ENCODE measurements at regions of chr18 and their contacts with region 1.

Region 1: DNA sequence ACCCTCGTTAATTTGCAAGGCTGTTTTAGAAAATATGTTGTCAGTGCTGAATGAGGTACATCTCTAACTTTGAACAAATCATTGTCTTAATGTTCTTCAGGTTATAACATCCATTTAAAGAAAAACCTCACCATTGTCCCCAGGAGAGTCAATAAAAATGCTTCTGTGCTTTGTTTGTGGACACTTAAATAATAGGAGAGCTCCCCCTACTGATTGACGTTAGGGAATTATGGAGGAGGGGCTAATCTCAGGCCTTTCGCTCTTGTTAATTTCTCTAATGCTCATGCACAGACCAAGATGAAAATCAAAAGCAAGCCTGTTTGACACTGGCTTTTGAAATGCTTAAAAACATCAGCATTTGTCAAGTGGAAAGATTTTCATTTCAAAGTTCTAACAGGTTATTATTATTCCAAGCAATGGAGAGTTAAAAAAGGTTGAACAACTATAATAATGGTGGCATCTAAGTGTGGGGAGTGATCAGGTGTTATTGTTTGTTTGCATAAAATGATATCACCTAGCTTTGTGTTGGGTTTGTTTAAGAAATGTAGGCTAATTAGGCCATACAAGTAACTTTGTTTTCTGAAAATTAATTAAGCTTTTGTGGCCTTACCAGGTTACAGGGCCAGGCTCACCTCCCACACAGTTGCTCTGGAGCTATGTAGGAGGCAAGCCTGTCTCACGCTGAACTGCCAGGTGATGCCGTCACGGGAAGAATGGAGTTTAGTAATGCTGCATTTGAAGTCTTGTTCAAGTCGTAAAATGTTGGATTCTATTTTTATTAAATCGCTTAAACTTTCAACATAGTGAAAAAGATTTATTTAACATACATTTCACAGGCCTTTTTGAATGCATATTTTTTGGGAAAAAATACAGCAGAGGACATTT is 51.7 kb upstream of the SMIM21 start:
- DNase-seq: no peak
- H3K4me3 ChIP-seq: no peak overlapping the region
- H3K27ac ChIP-seq: no peak overlapping the region
- H3K4me1 ChIP-seq: no peaks in the 10 kb centered on the region
- H3K27me3 ChIP-seq: no peaks in the 10 kb centered on the region
- CTCF ChIP-seq: peak; percentile 41 to 67 (median 47)
- POLR2A ChIP-seq: no peak

Region 2: DNA sequence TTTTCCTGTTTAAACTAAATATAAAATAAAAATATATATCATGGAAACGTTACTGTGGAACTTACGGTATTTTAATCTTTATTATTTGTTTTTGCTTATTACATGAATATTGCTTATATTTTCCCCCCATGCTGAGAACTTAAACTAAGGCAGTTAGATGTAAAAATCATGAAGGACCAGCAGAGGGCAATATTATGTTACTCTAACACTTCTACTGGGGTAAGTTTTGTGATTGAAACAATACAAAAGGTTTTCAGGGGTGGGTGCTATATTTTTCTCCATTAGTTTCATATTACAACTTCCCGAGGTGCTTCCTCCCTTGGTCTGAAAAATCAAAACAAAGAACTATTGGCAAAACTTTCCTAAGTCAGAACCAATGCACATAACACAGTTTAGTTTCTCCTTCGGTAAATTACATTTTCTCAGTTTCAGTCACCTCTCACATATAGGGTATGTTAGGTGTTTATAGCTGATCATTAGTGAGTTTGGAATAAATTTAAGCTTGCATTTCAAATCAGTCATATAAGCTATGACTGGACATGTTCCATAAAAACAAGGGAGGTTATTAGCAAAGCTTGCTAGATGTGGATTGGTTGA is 826.7 kb before region 1 on chr18:
- intact Hi-C with region 1: loop called (anchors 10 kb)
- DNase-seq: no peak
- H3K4me3 ChIP-seq: no peak overlapping the region
- H3K27ac ChIP-seq: no peak overlapping the region
- H3K4me1 ChIP-seq: no peaks in the 10 kb centered on the region
- H3K27me3 ChIP-seq: no peaks in the 10 kb centered on the region
- CTCF ChIP-seq: peak; percentile 33 to 61 (median 38)
- POLR2A ChIP-seq: no peak

Region 3: DNA sequence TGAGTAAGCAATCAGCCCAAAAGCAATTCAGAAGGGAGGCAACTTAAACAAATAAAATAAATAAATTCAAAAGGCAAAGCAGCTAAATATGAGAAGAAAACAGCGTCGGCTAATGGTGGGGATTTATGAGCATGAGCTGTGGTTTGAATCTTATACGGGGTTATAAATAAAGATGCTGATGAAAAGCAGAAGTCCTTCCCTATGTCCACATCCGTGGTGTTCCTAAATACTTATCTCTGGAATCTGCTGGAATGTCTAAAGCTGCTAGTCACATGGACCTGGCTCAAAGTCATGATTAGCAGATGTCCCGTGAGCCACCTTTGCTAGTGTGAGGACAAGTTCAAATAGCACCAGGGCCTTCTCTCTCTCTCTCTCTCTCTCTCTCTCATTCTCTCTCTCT is 85.5 kb before region 1 on chr18:
- intact Hi-C with region 1: no loop called
- DNase-seq: no peak
- H3K4me3 ChIP-seq: no peak overlapping the region
- H3K27ac ChIP-seq: no peak overlapping the region
- H3K4me1 ChIP-seq: no peaks in the 10 kb centered on the region
- H3K27me3 ChIP-seq: no peaks in the 10 kb centered on the region
- CTCF ChIP-seq: no peak
- POLR2A ChIP-seq: no peak

Region 4: GRCh38 chr18:75422341-75422910 is 56.8 kb before region 1 on chr18:
- intact Hi-C with region 1: no loop called
- DNase-seq: no peak
- H3K4me3 ChIP-seq: no peak overlapping the region
- H3K27ac ChIP-seq: no peak overlapping the region
- H3K4me1 ChIP-seq: no peaks in the 10 kb centered on the region
- H3K27me3 ChIP-seq: no peaks in the 10 kb centered on the region
- CTCF ChIP-seq: no peak
- POLR2A ChIP-seq: no peak

Measured in testis (tissue), 5 donors.